Activated T-helper 2 cell treated with anti-CD3 and anti-CD28 coated beads, Interferon-gamma antibody, Interleukin-2, Interleukin-4, amounts not matched to agents 10 μg/mL and 5 μg/mL and 100 μg/mL, durations not matched to agents 14 hours and 24 hours and 36 hours (primary cell): ENCODE measurements at regions of chr16 and their contacts with region 1.

Region 1: GRCh38 chr16:29862884-29863668 is at the start of gene CDIPT:
- DNase-seq: peak; percentile 90
- H3K4me3 Mint-ChIP-seq: peak within 1 kb of the TSS; percentile 98
- H3K27ac Mint-ChIP-seq: peak within 1 kb of the TSS; percentile 99
- H3K4me1 Mint-ChIP-seq: peaks cover 19% of the 10 kb centered on the region
- H3K27me3 Mint-ChIP-seq: no peaks in the 10 kb centered on the region
- total RNA-seq, gene CDIPT: 64.2 and 66.6 TPM in 2 replicates

Region 2: DNA sequence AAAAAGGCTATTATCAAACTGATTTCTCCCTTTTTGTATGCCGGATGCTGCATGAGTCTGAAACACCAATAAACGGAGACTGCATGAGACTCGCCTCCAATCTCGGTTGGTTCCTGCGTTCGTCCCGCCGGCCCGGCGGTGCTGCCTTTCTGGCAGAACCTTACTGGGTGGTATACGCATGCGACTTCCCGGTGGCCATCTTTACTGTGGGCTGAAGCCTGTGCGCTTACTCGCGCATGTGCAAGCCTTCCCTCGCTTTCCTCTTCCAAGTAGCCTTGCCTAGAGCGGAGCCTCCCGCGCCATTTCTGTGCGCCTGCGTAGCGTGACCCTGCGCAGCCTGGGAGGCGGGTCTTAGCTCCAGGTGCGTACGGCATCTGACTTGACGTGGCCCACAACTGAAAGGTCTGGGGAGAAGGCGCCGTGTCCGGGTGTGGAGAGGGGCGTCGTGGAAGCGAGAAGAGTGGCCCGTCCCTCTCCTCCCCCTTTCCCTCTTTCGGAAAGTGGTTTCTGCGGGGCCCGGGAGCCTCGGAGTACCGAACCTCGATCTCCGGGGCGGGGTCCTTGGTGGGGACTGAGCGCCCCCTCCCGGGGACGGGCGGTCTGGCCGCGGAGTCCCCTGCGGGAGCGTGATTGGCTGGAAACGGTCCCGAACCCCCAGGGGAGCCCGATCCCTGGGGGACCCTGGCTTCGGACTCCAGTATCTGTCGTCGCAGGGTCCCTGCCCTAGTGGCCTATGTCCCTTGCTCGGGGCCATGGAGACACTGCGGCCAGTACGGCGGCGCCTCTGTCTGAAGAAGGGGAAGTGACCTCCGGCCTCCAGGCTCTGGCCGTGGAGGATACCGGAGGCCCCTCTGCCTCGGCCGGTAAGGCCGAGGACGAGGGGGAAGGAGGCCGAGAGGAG is 47.0 kb before region 1 on chr16 and contains the start of gene PAGR1:
- intact Hi-C with region 1: loop called (anchors 1 kb)
- DNase-seq: peak; percentile 99
- H3K4me3 Mint-ChIP-seq: peak within 1 kb of the TSS; percentile 89
- H3K27ac Mint-ChIP-seq: peak within 1 kb of the TSS; percentile 94
- H3K4me1 Mint-ChIP-seq: peaks cover 46% of the 10 kb centered on the region
- H3K27me3 Mint-ChIP-seq: peaks cover 1% of the 10 kb centered on the region
- total RNA-seq, gene PAGR1: 27.6 and 29.5 TPM in 2 replicates

Region 3: DNA sequence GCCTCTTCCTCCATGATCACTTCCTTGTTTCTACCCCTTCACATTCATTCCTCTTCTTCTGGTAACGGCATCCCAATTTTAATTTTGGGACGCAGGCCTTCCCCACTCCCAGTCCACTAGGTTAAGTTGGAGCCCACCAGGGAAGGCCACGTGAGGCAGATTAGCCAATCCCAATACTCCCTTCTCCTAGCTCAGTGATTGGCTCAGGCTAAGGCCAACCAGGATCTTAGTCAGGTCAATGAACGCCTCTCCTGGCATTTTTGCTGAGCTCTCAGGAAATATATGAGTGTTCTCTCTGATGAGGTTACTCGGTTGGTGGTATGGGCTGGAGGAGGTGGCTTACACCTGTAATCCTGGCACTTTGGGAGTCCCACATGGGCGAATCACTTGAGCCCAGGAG is 20.9 kb after region 1 on chr16:
- intact Hi-C with region 1: no loop called
- DNase-seq: no peak
- H3K4me3 Mint-ChIP-seq: no peak overlapping the region
- H3K27ac Mint-ChIP-seq: no peak overlapping the region
- H3K4me1 Mint-ChIP-seq: no peaks in the 10 kb centered on the region
- H3K27me3 Mint-ChIP-seq: peaks cover 4% of the 10 kb centered on the region

Region 4: DNA sequence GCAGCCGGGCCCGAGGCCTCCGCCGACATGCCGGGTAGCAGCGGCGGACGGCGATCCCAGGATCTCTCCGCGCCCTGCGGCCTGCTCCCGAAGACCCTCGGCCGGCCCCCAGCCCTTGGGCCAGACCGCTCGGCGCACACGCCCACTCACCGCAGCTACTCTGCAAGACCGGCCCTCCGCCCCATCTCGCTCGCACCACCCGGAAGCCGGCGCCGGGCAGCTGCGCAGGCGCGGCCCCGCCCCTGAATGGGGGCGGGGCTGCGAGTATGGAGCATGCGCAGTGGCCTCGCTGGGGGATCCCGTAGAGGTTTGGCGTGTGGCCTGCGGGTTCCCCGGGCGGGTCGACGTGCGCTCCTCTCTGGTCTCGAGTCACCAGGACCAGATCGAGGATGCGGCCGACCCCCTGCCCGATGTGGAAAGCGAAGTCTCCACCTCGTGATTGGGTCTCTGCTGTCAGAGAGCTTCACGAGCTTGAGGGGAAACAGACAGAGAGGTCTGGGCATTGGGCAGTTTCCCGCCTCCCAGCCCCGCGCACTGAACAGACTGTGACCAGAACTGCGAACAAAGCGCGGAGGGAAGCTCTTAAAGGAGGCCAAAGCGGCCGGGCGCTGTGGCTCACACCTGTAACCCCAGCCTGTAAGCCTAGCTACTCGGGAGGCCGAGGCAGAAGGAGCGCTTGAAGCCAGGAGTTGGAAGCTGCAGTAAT is 63.1 kb after region 1 on chr16 and contains the start of gene KCTD13:
- intact Hi-C with region 1: loop called (anchors 1 kb)
- DNase-seq: peak; percentile 91
- H3K4me3 Mint-ChIP-seq: peak within 1 kb of the TSS; percentile 95
- H3K27ac Mint-ChIP-seq: peak within 1 kb of the TSS; percentile 94
- H3K4me1 Mint-ChIP-seq: peaks cover 32% of the 10 kb centered on the region
- H3K27me3 Mint-ChIP-seq: no peaks in the 10 kb centered on the region
- total RNA-seq, gene KCTD13: 39.7 and 47.5 TPM in 2 replicates

Region 5: GRCh38 chr16:29995911-29996772 is 133.1 kb after region 1 on chr16 and contains the start of gene INO80E:
- intact Hi-C with region 1: loop called (anchors 10 kb)
- DNase-seq: peak; percentile 99
- H3K4me3 Mint-ChIP-seq: peak within 1 kb of the TSS; percentile 98
- H3K27ac Mint-ChIP-seq: peak within 1 kb of the TSS; percentile 96
- H3K4me1 Mint-ChIP-seq: peaks cover 22% of the 10 kb centered on the region
- H3K27me3 Mint-ChIP-seq: no peaks in the 10 kb centered on the region
- total RNA-seq, gene INO80E: 112 and 119 TPM in 2 replicates